ENCODE measurements at regions of chr3 and their contacts with region 1.

Region 1: DNA sequence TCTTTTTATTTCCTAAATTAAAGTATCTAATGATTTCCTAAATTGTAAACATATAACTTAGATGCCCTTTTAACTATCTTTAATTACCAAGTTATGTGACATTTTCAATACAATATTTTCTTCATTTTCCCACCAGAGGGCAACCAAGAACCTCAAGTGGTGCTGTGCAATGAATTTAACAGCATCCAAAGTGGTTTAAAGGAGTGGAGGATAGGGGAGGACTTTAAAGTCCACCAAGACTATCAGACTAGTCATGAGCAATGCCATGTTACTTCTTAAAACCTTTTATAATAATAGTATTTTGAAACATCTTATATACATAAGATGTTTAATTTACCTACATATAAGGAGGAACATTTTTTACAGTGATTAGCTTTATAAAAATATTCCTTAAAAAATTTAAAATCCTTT is 74.4 kb downstream of the DLG1 start:
- DNase-seq: peak; percentile 32
- ATAC-seq: peak; percentile 83
- H3K4me3 ChIP-seq: no peak overlapping the region
- H3K27ac ChIP-seq: no peak overlapping the region
- H3K4me1 ChIP-seq: peaks cover 0 to 9% of the 10 kb centered on the region in 2 experiments; a peak in 1 of 4 replicates
- H3K27me3 ChIP-seq: no peaks in the 10 kb centered on the region
- CTCF ChIP-seq: peak; percentile 39 to 68 (median 59)
- POLR2A ChIP-seq: no peak
- RAD21 ChIP-seq: peak; percentile 76

Region 2: DNA sequence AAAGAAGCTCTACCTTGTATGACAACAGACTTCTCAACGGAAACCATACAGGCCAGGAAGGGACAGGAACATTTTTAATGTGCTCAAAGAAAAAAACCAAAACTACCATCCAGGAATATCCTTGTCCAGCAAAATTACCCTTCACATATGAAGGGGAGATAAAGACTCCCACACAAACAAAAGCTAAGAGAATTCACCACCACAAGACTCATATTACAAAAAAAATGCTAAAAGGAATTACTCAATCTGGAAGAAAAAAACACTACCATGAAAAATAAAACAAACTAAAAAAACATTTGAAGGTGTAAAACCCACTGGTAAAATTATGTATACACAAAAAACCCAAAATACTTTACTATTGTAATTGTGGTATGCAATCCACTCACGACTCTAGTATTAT is 17.1 kb after region 1 on chr3:
- CTCF ChIA-PET with region 1: no interaction called
- POLR2A ChIA-PET with region 1: no interaction called
- RAD21 ChIA-PET with region 1: no interaction called
- intact Hi-C with region 1: no loop called
- DNase-seq: no peak
- ATAC-seq: no peak
- H3K4me3 ChIP-seq: no peak overlapping the region
- H3K27ac ChIP-seq: no peak overlapping the region
- H3K4me1 ChIP-seq: no peaks in the 10 kb centered on the region
- H3K27me3 ChIP-seq: no peaks in the 10 kb centered on the region
- CTCF ChIP-seq: no peak
- POLR2A ChIP-seq: no peak
- RAD21 ChIP-seq: no peak

Region 3: GRCh38 chr3:197372047-197372666 is 148.1 kb after region 1 on chr3:
- CTCF ChIA-PET with region 1: no interaction called
- POLR2A ChIA-PET with region 1: no interaction called
- RAD21 ChIA-PET with region 1: no interaction called
- intact Hi-C with region 1: no loop called
- DNase-seq: no peak
- ATAC-seq: peak; percentile 73
- H3K4me3 ChIP-seq: peak overlapping the region in 1 of 2 experiments; percentile 23; a peak in 1 of 4 replicates
- H3K27ac ChIP-seq: no peak overlapping the region
- H3K4me1 ChIP-seq: peaks cover 11 to 16% of the 10 kb centered on the region in 2 experiments
- H3K27me3 ChIP-seq: no peaks in the 10 kb centered on the region
- CTCF ChIP-seq: no peak
- POLR2A ChIP-seq: no peak
- RAD21 ChIP-seq: no peak

Region 4: DNA sequence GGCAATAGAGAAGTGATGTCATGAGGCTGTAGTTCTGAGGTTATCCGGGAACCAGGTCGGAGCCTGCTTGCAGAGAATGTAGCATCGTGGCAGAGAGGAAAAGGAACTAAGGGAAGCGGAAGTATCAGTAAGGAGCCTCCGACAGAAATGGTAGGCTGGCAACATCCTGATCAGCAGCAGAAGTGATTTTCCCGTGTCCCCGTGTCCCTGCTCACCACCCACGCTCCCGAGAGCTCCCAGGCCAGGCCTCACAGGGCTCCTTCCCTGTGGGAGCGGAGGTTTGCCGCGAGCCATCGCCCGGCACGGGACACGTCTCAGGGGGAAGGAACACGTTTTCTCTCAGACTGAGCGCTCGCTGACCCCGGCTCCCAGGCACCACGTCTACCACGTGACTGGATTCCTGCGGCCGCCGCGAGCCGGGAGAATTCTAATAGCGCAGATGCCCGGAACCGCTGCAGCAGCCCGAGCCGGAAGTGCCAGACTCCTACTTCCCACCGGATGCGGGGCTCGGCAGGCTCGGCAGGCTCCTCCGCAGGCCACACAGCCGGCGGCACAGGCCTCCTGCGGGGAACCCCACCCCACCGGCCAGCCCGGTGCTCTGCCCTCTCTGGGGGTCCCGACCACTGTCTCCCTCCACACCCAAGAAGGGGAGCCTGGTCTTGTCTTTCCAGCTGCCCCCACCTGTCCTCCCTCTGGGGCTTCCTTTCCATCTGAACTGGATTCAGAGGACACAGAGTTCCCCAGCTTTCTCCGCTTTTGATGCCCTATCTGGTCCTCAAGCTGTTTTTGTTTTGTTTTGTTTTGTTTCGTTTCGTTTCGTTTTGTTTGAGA is 232.4 kb after region 1 on chr3:
- CTCF ChIA-PET with region 1: interaction called, 11 read pairs
- POLR2A ChIA-PET with region 1: no interaction called
- RAD21 ChIA-PET with region 1: no interaction called
- intact Hi-C with region 1: loop called (anchors 1 kb)
- DNase-seq: peak; percentile 54
- ATAC-seq: peak; percentile 87
- H3K4me3 ChIP-seq: peak overlapping the region; percentile 68 to 81
- H3K27ac ChIP-seq: peak overlapping the region; percentile 72
- H3K4me1 ChIP-seq: peaks cover 4 to 27% of the 10 kb centered on the region in 2 experiments; a peak in 1 of 4 replicates
- H3K27me3 ChIP-seq: no peaks in the 10 kb centered on the region
- CTCF ChIP-seq: no peak
- POLR2A ChIP-seq: peak; percentile 68
- RAD21 ChIP-seq: peak; percentile 36

Region 5: GRCh38 chr3:197501879-197502620 is 278.0 kb after region 1 on chr3:
- CTCF ChIA-PET with region 1: interaction called, 12 read pairs
- POLR2A ChIA-PET with region 1: no interaction called
- RAD21 ChIA-PET with region 1: no interaction called
- intact Hi-C with region 1: loop called (anchors 1 kb)
- DNase-seq: no peak
- ATAC-seq: peak; percentile 74
- H3K4me3 ChIP-seq: no peak overlapping the region
- H3K27ac ChIP-seq: no peak overlapping the region
- H3K4me1 ChIP-seq: peaks cover 9 to 30% of the 10 kb centered on the region in 2 experiments; a peak in 3 of 4 replicates
- H3K27me3 ChIP-seq: no peaks in the 10 kb centered on the region
- CTCF ChIP-seq: peak; percentile 62 to 76 (median 66); a peak in 5 of 6 replicates
- POLR2A ChIP-seq: no peak
- RAD21 ChIP-seq: peak; percentile 82

Region 6: DNA sequence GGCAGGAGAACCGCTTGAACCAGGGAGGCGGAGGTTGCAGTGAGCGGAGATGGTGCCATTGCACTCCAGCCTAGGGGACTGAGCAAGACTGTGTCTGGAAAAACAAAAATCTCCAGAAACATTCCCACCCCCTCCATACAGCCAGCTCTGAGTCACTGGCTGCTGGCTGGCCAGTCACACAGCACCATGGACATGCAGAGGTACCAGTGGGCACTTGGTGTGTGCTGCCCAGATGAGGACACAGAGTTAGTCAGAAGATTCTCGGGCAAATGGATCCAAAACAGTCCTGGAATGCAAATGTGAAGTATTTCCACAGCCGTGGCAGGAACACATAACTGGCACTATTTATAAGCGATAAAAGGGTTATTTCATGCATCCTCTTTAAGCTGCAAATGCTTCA is 287.1 kb after region 1 on chr3:
- CTCF ChIA-PET with region 1: interaction called, 3 read pairs
- POLR2A ChIA-PET with region 1: no interaction called
- RAD21 ChIA-PET with region 1: no interaction called
- intact Hi-C with region 1: loop called (anchors 1 kb)
- DNase-seq: no peak
- ATAC-seq: no peak
- H3K4me3 ChIP-seq: no peak overlapping the region
- H3K27ac ChIP-seq: no peak overlapping the region
- H3K4me1 ChIP-seq: peaks cover under 1 to 12% of the 10 kb centered on the region in 2 experiments; a peak in 3 of 4 replicates
- H3K27me3 ChIP-seq: no peaks in the 10 kb centered on the region
- CTCF ChIP-seq: no peak
- POLR2A ChIP-seq: no peak
- RAD21 ChIP-seq: no peak